Esophagus muscularis mucosa (tissue), 4 donors: ENCODE measurements at regions of chr6 and their contacts with region 1.

Region 1: DNA sequence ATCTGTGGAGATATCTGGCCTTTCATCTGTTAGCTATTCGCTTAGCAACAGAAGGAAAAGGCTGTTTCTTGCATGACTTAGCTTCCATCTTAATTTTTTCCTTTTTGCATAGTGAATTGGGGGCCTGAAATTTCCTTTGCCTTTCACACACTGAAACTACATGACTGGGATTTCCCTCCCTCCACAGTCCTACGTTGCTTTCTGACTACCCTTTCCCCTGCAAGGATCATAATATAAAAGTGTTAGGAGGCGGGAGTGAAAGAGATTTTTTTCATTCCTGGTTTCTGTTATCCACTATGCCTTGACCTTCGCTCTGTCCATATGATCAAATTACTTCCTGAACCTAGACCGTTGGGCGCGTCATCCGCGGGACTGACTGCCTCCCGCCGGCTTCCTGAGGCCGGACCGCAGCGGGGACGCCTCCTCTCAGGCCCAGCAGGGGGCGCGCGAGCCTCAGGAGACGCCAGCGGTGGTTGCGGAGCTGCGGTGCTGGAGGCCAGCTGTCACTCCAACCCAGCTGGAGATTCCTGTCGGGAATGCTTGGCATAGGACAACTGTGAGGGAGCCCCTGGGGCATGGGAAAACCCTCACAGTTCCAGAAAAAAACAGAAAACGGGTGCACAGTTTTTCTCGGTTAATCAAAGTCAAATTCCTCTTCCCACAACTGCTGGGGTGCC is 55.6 kb downstream of the MEP1A start:
- DNase-seq: peak; percentile 91
- H3K4me3 ChIP-seq: no peak overlapping the region
- H3K27ac ChIP-seq: no peak overlapping the region
- H3K4me1 ChIP-seq: peaks cover 5 to 13% (median 10%) of the 10 kb centered on the region in 4 donors
- H3K27me3 ChIP-seq: no peaks in the 10 kb centered on the region
- CTCF ChIP-seq: peak; percentile 90 to 99 (median 95)
- EP300 ChIP-seq: no peak
- POLR2A ChIP-seq: no peak

Region 2: GRCh38 chr6:46704562-46704961 is 144.3 kb before region 1 on chr6:
- intact Hi-C with region 1: no loop called
- DNase-seq: no peak
- H3K4me3 ChIP-seq: no peak overlapping the region
- H3K27ac ChIP-seq: no peak overlapping the region
- H3K4me1 ChIP-seq: no peaks in the 10 kb centered on the region
- H3K27me3 ChIP-seq: no peaks in the 10 kb centered on the region
- CTCF ChIP-seq: no peak
- EP300 ChIP-seq: no peak
- POLR2A ChIP-seq: no peak

Region 3: DNA sequence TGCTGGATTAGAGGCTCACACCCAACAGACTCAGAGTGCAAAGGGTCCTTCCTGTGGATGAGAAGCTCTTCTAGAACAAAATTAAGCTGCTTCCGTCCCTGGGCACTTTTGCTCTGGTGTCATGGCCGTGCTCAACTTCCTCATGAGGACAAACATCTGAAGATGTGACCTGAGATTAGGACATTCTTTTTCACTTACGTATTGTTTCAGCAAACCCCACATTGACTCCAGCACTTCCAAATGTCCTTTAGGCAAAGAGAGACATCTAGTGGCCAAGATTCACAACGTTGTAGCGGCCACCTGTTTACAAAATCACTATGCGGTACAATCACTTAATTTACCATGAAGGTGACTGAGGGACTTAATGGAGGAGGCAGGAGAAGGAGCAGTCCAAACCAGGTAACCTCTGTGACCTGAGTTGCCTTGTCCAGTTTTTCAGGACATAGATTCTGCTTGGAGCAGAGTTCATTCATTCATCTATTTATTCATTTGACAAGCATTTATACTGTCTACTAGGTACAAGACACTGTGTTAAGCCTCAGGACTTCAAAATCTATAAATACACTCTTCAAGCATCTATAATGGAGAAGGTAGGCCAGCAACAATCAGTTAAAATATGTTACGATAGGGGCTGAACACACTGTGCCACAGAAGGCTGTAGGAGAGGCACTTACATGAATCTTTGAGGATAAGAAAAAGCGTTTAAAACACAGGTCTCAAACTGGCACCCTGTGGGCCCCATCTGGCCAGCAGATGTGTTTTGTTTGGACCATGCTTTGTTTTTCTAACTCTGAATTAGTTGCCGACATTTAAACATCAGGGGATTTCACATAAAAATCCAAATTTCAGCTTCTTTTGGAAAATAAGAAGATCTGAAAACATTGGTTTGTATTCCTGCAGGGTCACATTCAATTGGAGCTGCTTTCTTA is 198.9 kb after region 1 on chr6:
- intact Hi-C with region 1: loop called (anchors 2 kb)
- DNase-seq: no peak
- H3K4me3 ChIP-seq: no peak overlapping the region
- H3K27ac ChIP-seq: no peak overlapping the region
- H3K4me1 ChIP-seq: peaks cover 4 to 10% (median 7%) of the 10 kb centered on the region in 4 donors
- H3K27me3 ChIP-seq: no peaks in the 10 kb centered on the region
- CTCF ChIP-seq: peak; percentile 66 to 76 (median 66)
- EP300 ChIP-seq: no peak
- POLR2A ChIP-seq: no peak

Region 4: DNA sequence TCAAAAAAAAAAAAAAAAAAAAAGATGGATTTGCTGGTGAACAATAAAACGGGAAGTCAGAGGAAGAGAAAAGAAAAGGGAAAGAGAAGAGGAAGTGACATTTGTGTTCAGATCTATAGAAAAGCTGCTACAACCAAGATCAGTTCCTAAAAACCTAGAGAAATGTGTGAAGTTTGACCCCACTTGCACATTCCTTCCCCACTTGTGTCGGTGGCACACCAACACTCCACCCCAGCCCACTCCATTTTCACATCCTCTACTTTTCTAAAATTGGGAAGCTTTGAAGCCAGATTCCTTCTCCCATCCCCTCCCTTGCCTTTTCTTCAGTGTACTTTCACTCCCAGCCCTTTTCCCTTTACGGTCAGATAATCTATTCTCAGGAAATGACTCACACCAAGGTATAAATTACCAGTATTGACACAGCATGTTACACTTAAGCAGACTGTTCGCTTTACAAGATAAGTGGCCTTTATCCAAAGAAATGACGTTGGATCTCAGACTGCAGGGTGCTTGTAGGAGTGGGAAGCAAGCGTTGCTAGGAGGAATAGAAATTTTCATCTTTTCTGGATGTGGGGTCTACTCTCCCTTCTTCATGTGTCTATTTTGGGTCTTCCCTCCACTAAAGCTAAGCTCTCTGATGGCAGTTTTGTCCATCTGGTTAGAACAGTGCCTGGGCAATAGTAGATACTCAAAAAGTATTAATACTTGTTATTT is 285.8 kb after region 1 on chr6:
- intact Hi-C with region 1: no loop called
- DNase-seq: no peak
- H3K4me3 ChIP-seq: no peak overlapping the region
- H3K27ac ChIP-seq: peak overlapping the region; percentile 11 to 42 (median 41)
- H3K4me1 ChIP-seq: peaks cover 23 to 61% (median 51%) of the 10 kb centered on the region in 4 donors
- H3K27me3 ChIP-seq: no peaks in the 10 kb centered on the region
- CTCF ChIP-seq: no peak
- EP300 ChIP-seq: no peak
- POLR2A ChIP-seq: no peak